Ascending aorta (tissue), 2 donors: ENCODE measurements at regions of chr22 and their contacts with region 1.

Region 1: DNA sequence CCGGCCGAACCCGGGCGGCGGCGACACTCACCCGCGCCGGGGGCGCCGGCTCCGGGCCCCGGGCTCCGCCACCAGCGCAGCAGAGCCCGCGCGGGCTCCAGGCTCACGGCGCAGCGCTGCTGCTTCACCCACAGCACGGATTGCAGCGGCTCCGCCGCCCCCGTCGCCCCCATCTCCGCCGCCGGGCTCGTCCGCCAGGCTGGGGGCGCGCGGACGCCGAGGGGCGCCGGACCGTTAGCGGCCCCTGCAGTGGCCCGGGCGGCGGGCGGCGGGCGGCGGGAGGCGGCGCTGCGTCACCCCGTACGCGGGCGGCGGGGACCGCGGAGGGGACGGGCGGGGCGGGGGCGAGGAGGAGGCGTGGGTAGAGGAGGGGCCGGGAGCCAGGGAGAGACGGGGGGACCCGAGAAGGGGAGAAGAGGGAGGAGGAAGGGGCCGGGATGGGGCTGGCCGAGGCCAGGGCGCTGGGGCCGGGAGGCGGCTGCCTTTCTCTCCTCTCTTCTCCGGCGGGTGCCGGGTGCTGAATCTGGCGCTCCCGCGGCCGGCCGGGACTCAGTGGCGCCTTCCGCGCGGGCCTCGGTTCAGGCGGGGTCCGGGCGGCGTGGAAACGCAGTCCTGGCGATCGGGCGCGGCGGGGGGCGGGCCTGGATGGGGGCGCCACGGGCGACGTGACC is at the start of gene CERK:
- DNase-seq: peak in 1 of 2 donors; percentile 90
- H3K4me3 ChIP-seq: peak within 1 kb of the TSS; percentile 88 to 99
- H3K27ac ChIP-seq: peak within 1 kb of the TSS; percentile 92 to 93
- H3K4me1 ChIP-seq: peaks cover 5 to 36% of the 10 kb centered on the region in 2 donors
- H3K27me3 ChIP-seq: no peaks in the 10 kb centered on the region
- CTCF ChIP-seq: no peak
- total RNA-seq, gene CERK: 27.5 TPM

Region 2: DNA sequence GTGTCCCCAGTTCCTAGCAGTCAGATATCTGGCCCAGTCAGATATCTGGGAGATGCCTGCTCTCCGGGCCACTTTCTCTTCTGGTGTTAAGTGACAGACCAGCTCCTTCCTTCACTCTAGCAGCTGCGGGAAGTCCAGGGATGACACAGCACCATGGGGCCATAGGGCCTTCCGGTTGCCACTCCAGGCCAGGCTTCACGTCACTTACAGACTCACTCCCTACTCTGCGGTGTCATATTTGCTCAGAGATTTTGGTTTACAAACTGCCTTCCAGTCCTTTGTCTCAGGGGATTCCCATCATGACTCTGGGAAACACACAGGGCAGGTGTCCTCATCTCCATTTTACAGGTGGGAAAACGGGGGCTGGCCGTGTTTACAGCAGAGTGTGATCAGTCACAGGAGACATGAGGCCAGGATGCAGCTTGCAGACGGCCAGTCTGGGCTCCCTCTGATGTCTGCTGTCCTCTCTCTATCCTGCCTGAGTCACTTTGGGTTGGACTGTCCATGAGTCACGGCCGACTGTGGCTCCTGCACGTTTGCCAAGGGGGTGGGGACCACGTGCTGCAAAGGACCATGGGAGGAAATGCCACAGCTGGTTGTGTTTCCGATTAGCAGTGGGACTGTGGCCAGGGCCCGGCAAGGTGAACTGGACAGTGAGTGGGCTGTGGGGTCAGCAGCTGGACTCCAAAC is 16.1 kb after region 1 on chr22:
- intact Hi-C with region 1: loop called (anchors 1 kb)
- DNase-seq: peak; percentile 91 to 99
- H3K4me3 ChIP-seq: peak overlapping the region; percentile 18 to 32
- H3K27ac ChIP-seq: peak overlapping the region; percentile 96 to 97
- H3K4me1 ChIP-seq: peaks cover 18 to 20% of the 10 kb centered on the region in 2 donors
- H3K27me3 ChIP-seq: no peaks in the 10 kb centered on the region
- CTCF ChIP-seq: no peak

Region 3: GRCh38 chr22:46762238-46763050 is 24.3 kb after region 1 on chr22 and contains the start of gene TBC1D22A:
- intact Hi-C with region 1: loop called (anchors 1 kb)
- DNase-seq: peak; percentile 62 to 96
- H3K4me3 ChIP-seq: peak within 1 kb of the TSS; percentile 79 to 93
- H3K27ac ChIP-seq: peak within 1 kb of the TSS; percentile 92 to 96
- H3K4me1 ChIP-seq: peaks cover 0 to 20% of the 10 kb centered on the region in 2 donors
- H3K27me3 ChIP-seq: no peaks in the 10 kb centered on the region
- CTCF ChIP-seq: peak in 1 of 3 experiments; percentile 24
- total RNA-seq, gene TBC1D22A: 87.8 TPM

Region 4: DNA sequence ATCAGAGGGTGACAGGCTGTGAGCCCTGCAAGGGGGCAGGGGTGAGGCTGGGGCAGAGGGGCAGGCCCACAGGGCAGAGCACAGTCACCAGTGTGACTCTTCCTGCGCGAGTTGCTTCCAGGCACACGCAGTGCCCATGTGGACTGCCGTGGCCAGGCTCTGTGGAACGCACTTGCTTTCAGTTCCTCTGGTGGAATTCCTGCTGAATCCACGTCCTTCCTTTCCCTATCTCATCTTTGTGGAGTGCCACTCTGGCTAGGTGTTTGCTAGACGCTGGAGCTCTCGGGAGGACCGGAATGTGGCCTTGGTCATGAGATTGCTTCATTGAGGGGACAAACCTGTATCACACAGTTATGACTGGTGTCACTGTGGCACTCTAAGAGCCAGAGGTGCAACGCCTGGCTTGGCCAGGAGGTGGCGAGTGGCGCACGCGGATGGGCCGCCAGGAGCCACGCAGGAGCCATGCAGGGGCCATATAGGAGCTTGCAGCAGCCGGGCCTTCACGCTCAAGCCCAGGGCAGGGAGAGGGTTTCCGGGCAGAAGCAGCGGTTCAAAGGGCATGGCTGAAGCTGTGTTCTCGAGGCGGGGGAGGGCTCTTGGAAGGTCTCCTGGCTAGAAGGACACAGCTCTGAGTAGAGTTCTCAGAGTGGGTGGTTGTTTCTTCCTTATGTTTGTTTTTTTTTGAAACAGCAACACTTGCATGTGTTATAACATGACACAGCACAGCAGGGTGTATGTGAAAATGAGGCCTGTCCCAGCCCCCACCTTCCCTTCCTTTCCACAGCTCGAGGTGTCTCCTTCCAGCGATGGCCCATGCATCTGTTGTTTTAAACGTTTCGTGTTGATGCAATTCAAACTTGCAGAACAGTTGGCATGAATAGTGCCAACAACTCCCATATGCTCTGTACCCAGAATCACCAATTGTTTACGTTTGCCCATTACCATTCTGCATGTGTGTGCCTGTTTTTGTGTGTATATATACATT is 60.5 kb after region 1 on chr22:
- intact Hi-C with region 1: loop called (anchors 5 kb)
- DNase-seq: peak in 1 of 2 donors; percentile 80
- H3K4me3 ChIP-seq: no peak overlapping the region
- H3K27ac ChIP-seq: no peak overlapping the region
- H3K4me1 ChIP-seq: peaks cover 0 to 3% of the 10 kb centered on the region in 2 donors
- H3K27me3 ChIP-seq: no peaks in the 10 kb centered on the region
- CTCF ChIP-seq: peak; percentile 86 to 96 (median 95)